WTC11 (cell line): ENCODE measurements at regions of chr1 and their contacts with region 1.

Region 1: DNA sequence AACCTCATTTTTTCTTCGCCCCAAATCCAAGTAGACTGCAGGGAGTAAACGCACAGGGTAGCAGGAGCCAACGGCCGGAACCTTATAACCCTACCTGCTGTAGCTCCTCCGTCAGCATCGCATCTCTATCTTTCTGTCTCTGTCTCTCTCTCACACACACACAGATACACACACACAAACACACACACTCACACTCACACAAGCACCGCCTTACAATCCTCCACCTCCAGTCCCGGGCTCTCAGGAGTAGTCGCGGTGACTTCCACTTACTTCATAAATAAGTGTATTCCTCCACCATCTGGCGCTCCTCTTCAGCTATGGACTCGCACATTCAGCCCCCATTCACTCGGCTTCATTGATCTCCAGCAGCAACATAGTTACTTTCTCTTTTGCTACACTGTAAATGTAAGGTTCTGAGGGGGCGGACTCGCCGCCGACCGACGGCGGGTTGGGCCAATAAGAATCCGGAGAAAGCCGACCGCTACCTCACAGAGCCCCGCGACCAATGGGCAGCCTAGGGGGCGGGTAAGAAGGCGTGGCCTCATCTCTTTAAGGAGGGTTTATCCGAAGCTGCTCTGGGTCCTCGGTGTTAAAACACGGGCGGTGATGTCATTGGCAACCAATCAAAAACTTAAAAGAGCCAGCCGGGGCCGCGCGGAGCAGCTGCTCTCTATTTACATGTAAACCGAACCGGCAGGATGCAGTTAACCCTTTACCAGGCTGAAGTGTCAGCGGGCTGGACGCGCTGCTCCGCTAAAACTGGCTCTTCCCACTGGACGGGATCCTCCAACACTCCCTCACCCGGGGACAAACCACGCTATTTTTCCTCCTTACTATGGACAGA is at the start of gene DUSP10:
- DNase-seq: peak; percentile 99
- ATAC-seq: peak; percentile 91
- H3K4me3 Mint-ChIP-seq: no peak within 1 kb of the TSS; the same call in 1 of the 2 replicates
- H3K27ac Mint-ChIP-seq: no peak within 1 kb of the TSS
- H3K4me1 Mint-ChIP-seq: peaks cover 17% of the 10 kb centered on the region
- H3K27me3 Mint-ChIP-seq: no peaks in the 10 kb centered on the region; the same call in 1 of the 2 replicates
- CTCF ChIP-seq: no peak
- total RNA-seq, gene DUSP10: 1.6 to 2.2 TPM (median 2.0 TPM) in 3 replicates

Region 2: DNA sequence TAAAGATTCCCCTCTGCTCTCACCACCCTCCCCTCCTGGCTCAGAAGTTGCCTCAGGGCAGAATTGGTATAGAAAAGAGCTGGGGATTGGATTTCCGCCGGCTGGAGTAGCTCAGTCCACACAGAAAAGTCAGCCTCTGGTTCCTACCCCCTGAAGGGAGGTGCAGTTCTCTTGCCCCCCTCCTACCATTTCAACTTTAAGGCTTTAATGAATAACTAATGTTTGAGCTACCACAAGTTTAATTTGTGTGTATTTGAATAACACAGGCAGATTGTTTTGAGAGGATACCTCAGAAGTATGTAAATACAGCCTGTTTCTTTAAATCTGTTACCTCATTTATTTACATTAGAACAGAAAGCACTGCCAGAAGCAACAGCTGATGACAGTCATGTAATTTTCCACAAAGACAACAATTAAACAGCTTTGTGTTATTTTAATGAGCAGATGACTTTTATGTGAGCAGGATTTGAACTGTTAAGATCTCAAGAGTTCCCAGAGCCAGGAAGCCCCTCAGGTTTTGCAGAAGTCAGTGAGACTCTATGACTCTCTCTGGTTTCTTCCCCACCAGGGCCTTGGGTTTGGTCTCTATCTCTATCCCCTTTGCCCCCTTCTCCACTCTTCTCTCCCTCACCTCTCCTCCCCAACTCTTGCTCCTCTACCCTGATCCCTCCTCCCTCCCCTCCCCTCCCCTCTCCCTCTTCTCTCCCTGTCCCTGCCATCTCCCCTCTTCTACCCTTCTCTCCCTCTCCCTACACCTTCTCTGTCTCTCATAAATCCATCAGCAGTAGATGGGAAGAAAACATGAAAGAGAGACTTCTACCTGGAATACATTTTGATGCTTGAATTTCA is 26.4 kb before region 1 on chr1:
- CTCF ChIA-PET with region 1: interaction called, 9 read pairs
- POLR2A ChIA-PET with region 1: interaction called, 21 read pairs
- DNase-seq: peak; percentile 58
- ATAC-seq: peak; percentile 87
- H3K4me3 Mint-ChIP-seq: peak overlapping the region; percentile 29
- H3K27ac Mint-ChIP-seq: peak overlapping the region; percentile 69
- H3K4me1 Mint-ChIP-seq: peaks cover 65% of the 10 kb centered on the region
- H3K27me3 Mint-ChIP-seq: peaks cover 63% of the 10 kb centered on the region
- CTCF ChIP-seq: no peak

Region 3: DNA sequence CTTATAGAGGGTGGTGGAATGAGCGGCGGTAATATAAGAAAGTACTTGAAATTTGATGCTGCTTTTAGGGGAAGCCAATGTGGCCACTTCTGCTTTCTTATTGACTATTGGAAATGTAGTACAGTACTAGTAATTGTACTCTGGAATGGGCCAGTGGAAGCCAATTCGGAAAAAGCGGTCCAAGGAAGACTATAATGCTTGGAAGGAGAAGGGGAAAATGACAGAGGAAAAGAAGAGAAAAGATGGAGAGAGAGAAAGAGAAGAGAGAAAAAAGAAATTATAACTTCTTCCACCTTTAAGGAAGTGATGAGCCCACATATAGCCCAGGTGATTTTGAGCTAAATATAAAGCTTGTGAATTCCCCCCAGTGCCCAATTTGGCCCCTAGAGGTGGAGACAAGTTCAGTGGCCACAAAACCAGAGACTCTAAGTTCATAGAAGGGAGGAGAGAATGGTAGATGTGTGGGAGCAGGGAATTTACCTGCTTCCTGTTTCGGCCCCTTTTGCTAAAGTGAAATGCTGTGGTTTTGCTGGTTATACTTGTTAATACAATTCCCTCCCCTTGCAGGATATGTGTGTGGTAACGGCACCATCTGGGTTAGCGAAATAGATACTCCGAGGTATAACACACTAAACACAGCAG is 35.6 kb after region 1 on chr1:
- CTCF ChIA-PET with region 1: no interaction called
- POLR2A ChIA-PET with region 1: no interaction called
- DNase-seq: no peak
- ATAC-seq: no peak
- H3K4me3 Mint-ChIP-seq: no peak overlapping the region
- H3K27ac Mint-ChIP-seq: no peak overlapping the region
- H3K4me1 Mint-ChIP-seq: peaks cover 10% of the 10 kb centered on the region
- H3K27me3 Mint-ChIP-seq: no peaks in the 10 kb centered on the region
- CTCF ChIP-seq: no peak

Region 4: DNA sequence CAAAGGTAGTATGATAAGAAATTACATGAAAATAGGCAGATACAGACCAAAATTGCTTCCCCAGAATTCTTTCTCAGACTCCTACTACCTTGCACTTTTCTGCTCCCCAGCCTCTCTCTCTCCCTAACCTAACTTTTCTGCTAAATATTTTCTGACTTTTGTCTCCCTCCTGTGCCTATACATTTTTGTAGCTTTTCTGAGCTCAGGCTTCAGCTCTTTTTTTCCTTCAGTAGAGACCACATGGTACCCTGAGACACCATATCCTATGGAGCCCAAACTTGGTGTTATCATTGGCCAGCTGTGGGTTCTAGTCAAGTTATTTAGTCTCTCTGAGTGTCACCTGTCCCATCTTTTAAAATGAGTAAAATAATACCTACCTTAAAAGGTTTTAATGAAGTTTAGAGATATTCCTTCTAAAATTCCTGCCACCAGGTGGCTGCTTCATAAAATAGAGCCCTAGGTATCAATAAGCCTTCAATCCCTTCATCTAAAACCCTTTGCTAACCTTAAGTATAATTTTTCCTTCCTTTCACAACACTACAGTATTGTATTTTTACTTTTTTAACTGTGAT is 237.6 kb after region 1 on chr1:
- CTCF ChIA-PET with region 1: interaction called, 10 read pairs
- POLR2A ChIA-PET with region 1: interaction called, 3 read pairs
- DNase-seq: no peak
- ATAC-seq: peak; percentile 28
- H3K4me3 Mint-ChIP-seq: no peak overlapping the region
- H3K27ac Mint-ChIP-seq: peak overlapping the region; percentile 81
- H3K4me1 Mint-ChIP-seq: peaks cover 59% of the 10 kb centered on the region
- H3K27me3 Mint-ChIP-seq: peaks cover 3% of the 10 kb centered on the region; the same call in 1 of the 2 replicates
- CTCF ChIP-seq: no peak